ENCODE measurements at regions of chr4 and their contacts with region 1.

Region 1: DNA sequence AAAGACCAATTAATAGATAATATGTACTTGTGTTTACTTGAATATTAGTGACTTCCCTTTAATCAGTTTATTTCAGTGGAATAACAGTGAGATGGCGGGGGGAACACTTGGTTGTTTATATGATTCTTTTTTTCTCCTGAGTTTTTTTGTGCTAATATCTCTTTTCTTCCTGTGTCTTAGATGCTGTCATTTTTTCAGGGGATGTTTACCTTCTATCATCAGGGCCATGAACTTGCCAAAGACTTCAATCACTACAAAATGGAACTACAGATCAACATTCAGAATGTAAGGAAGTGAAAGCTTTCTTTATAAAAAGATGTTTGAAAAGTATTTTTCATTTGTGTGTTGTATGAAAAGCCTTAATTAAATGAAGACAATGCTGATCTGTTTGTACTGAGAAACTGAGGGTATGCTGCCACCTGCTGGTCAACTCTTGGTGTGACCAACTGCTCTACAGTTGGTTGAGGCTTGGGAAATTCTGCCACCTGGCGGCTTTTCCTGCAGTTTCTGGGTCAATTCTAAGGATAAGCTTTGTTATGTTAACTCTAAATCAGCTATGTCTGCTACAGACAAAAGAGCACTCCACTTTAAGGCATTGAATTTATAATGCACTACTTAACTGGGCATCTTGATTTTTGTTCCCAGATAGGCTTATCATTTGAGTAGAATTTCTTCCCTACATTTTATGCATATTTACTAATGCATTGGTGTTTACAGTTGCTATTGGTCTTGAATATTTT is 134.8 kb downstream of the ARHGAP10 start:
- DNase-seq: peak; percentile 95
- ATAC-seq: peak; percentile 99
- H3K4me3 Mint-ChIP-seq: no peak overlapping the region
- H3K27ac Mint-ChIP-seq: no peak overlapping the region
- H3K4me1 Mint-ChIP-seq: peaks cover 10% of the 10 kb centered on the region
- H3K27me3 Mint-ChIP-seq: no peaks in the 10 kb centered on the region

Region 2: GRCh38 chr4:147590249-147590920 is 276.3 kb before region 1 on chr4:
- CTCF ChIA-PET with region 1: interaction called, 74 read pairs
- DNase-seq: peak; percentile 59
- ATAC-seq: no peak
- H3K4me3 Mint-ChIP-seq: no peak overlapping the region
- H3K27ac Mint-ChIP-seq: no peak overlapping the region
- H3K4me1 Mint-ChIP-seq: peaks cover 21% of the 10 kb centered on the region
- H3K27me3 Mint-ChIP-seq: peaks cover 8% of the 10 kb centered on the region

Region 3: GRCh38 chr4:147683717-147684700 is 182.7 kb before region 1 on chr4 and contains the start of gene PRMT9:
- CTCF ChIA-PET with region 1: interaction called, 28 read pairs
- DNase-seq: peak; percentile 93
- ATAC-seq: peak; percentile 99
- H3K4me3 Mint-ChIP-seq: peak within 1 kb of the TSS; percentile 92
- H3K27ac Mint-ChIP-seq: peak within 1 kb of the TSS; percentile 92
- H3K4me1 Mint-ChIP-seq: peaks cover 40% of the 10 kb centered on the region
- H3K27me3 Mint-ChIP-seq: peaks cover 5% of the 10 kb centered on the region
- total RNA-seq, gene PRMT9: 11.9 to 12.0 TPM

Region 4: DNA sequence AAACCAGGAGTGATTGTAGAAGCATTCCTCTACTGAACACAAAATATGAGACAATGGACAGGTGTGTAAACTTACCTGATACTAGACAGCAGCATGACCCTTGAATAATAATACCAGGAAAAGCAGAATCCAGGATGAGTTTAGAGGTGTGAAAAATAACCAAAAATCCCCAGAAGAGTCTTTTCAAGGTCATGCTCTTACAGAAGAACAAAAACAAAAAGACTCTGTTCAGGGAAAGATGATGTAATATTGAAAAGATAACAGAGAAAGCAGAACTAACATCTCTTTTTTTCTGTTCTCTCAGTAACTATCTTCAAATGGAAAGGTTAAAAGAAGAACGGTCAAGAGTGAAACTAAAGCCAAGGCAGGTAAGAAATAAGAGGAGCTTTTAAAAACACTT is 148.8 kb before region 1 on chr4:
- CTCF ChIA-PET with region 1: interaction called, 23 read pairs
- DNase-seq: no peak
- ATAC-seq: no peak
- H3K4me3 Mint-ChIP-seq: no peak overlapping the region
- H3K27ac Mint-ChIP-seq: no peak overlapping the region
- H3K4me1 Mint-ChIP-seq: peaks cover 9% of the 10 kb centered on the region
- H3K27me3 Mint-ChIP-seq: peaks cover 20% of the 10 kb centered on the region

Region 5: GRCh38 chr4:147786031-147786430 is 80.7 kb before region 1 on chr4:
- CTCF ChIA-PET with region 1: interaction called, 15 read pairs
- DNase-seq: no peak
- ATAC-seq: no peak
- H3K4me3 Mint-ChIP-seq: no peak overlapping the region
- H3K27ac Mint-ChIP-seq: no peak overlapping the region
- H3K4me1 Mint-ChIP-seq: peaks cover 31% of the 10 kb centered on the region
- H3K27me3 Mint-ChIP-seq: no peaks in the 10 kb centered on the region

Region 6: GRCh38 chr4:147855571-147856009 is 11.1 kb before region 1 on chr4:
- CTCF ChIA-PET with region 1: interaction called, 30 read pairs
- DNase-seq: no peak
- ATAC-seq: no peak
- H3K4me3 Mint-ChIP-seq: no peak overlapping the region
- H3K27ac Mint-ChIP-seq: no peak overlapping the region
- H3K4me1 Mint-ChIP-seq: no peaks in the 10 kb centered on the region
- H3K27me3 Mint-ChIP-seq: no peaks in the 10 kb centered on the region

Region 7: GRCh38 chr4:147916351-147916750 is 49.6 kb after region 1 on chr4:
- CTCF ChIA-PET with region 1: no interaction called
- DNase-seq: no peak
- ATAC-seq: no peak
- H3K4me3 Mint-ChIP-seq: no peak overlapping the region
- H3K27ac Mint-ChIP-seq: no peak overlapping the region
- H3K4me1 Mint-ChIP-seq: no peaks in the 10 kb centered on the region
- H3K27me3 Mint-ChIP-seq: no peaks in the 10 kb centered on the region

Region 8: DNA sequence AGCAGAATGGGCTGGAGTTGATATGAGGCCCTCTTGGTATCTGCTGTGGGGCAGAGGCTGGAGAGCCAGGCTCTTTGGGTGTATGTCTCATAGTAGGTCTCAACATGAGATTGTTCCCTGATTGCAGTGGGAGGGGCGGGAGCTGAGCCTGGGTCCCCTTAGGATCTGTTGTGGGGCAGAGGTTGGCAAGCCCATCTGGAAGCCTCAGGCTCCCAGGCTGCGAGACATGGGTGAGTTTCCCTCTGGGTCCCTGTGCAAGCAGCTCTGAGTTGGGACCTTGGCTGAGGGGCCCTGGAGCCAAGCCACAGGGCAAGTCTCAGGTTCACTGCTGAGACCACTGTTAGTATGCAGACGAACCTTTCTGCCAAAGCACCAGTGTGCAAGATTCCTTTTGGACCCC is 67.1 kb after region 1 on chr4:
- CTCF ChIA-PET with region 1: no interaction called
- DNase-seq: no peak
- ATAC-seq: no peak
- H3K4me3 Mint-ChIP-seq: no peak overlapping the region
- H3K27ac Mint-ChIP-seq: no peak overlapping the region
- H3K4me1 Mint-ChIP-seq: no peaks in the 10 kb centered on the region
- H3K27me3 Mint-ChIP-seq: no peaks in the 10 kb centered on the region